CD4-positive, alpha-beta memory T cell (primary cell): ENCODE measurements at regions of chr6 and their contacts with region 1.

Region 1: GRCh38 chr6:26122793-26123674 is 35.8 kb downstream of the HFE start:
- DNase-seq: peak; percentile 94 to 98 (median 98)
- H3K4me3 ChIP-seq: peak overlapping the region; percentile 87 to 98
- H3K4me3 Mint-ChIP-seq: peak overlapping the region; percentile 96 to 100 (median 100)
- H3K27ac ChIP-seq: peak overlapping the region; percentile 89
- H3K27ac Mint-ChIP-seq: peak overlapping the region; percentile 97 to 99 (median 99)
- H3K4me1 ChIP-seq: peaks cover 26% of the 10 kb centered on the region
- H3K4me1 Mint-ChIP-seq: peaks cover 20 to 54% (median 30%) of the 10 kb centered on the region in 4 donors
- H3K27me3 ChIP-seq: no peaks in the 10 kb centered on the region
- H3K27me3 Mint-ChIP-seq: peaks cover 0 to 3% of the 10 kb centered on the region in 2 donors

Region 2: GRCh38 chr6:26031595-26032339 is 91.3 kb before region 1 on chr6:
- CTCF ChIA-PET with region 1: interaction called, 17 read pairs
- POLR2A ChIA-PET with region 1: interaction called, 147 read pairs
- intact Hi-C with region 1: loop called (anchors 1 kb)
- DNase-seq: peak; percentile 86 to 94 (median 89)
- H3K4me3 ChIP-seq: peak overlapping the region; percentile 53 to 67
- H3K4me3 Mint-ChIP-seq: peak overlapping the region; percentile 91 to 99 (median 94)
- H3K27ac ChIP-seq: peak overlapping the region; percentile 71
- H3K27ac Mint-ChIP-seq: peak overlapping the region; percentile 89 to 98 (median 96)
- H3K4me1 ChIP-seq: peaks cover 35% of the 10 kb centered on the region
- H3K4me1 Mint-ChIP-seq: peaks cover 33 to 54% (median 44%) of the 10 kb centered on the region in 4 donors
- H3K27me3 ChIP-seq: no peaks in the 10 kb centered on the region
- H3K27me3 Mint-ChIP-seq: peaks cover 0 to 3% of the 10 kb centered on the region in 2 donors

Region 3: GRCh38 chr6:26087284-26088115 is 35.5 kb before region 1 on chr6 and contains the start of gene HFE:
- CTCF ChIA-PET with region 1: interaction called, 3 read pairs
- POLR2A ChIA-PET with region 1: interaction called, 64 read pairs
- intact Hi-C with region 1: no loop called
- DNase-seq: peak in 4 of 5 donors; percentile 24 to 43 (median 26)
- H3K4me3 ChIP-seq: peak within 1 kb of the TSS; percentile 67 to 79
- H3K4me3 Mint-ChIP-seq: peak within 1 kb of the TSS; percentile 77 to 93 (median 90)
- H3K27ac ChIP-seq: peak within 1 kb of the TSS; percentile 68
- H3K27ac Mint-ChIP-seq: peak within 1 kb of the TSS; percentile 71 to 94 (median 90)
- H3K4me1 ChIP-seq: peaks cover 36% of the 10 kb centered on the region
- H3K4me1 Mint-ChIP-seq: peaks cover 20 to 41% (median 28%) of the 10 kb centered on the region in 4 donors
- H3K27me3 ChIP-seq: no peaks in the 10 kb centered on the region
- H3K27me3 Mint-ChIP-seq: no peaks in the 10 kb centered on the region
- total RNA-seq, gene HFE: 3.5 to 4.2 TPM

Region 4: DNA sequence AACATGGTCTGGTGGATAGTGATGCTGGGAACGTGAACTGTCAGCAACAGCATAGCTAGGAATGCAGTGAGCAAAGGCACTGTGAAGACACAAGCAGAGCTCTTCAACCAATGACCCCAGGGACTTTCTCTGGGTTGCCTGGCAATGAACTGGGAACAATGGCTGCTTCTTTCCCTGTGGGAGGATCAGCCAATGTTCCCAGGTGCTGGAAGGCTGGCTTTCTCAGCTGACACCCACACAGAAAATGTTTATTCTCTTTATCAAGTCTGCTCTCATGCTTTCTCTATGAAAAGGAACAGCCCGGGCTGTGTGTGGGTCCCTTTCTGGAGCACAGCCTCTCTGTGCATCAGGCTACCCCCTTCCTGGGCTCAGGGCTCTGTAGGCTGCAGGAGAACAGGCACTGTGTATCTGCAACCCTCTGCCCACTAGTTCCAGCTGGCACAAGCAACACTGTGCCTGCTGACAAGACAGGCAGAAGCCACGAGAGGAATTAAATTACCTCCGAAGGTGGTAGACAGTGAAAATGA is 18.4 kb after region 1 on chr6:
- CTCF ChIA-PET with region 1: interaction called, 3 read pairs
- POLR2A ChIA-PET with region 1: interaction called, 90 read pairs
- intact Hi-C with region 1: loop called (anchors 1 kb)
- DNase-seq: no peak
- H3K4me3 ChIP-seq: no peak overlapping the region
- H3K4me3 Mint-ChIP-seq: no peak overlapping the region
- H3K27ac ChIP-seq: no peak overlapping the region
- H3K27ac Mint-ChIP-seq: no peak overlapping the region
- H3K4me1 ChIP-seq: no peaks in the 10 kb centered on the region
- H3K4me1 Mint-ChIP-seq: peaks cover 0 to 4% (median 3%) of the 10 kb centered on the region in 4 donors
- H3K27me3 ChIP-seq: no peaks in the 10 kb centered on the region
- H3K27me3 Mint-ChIP-seq: no peaks in the 10 kb centered on the region

Region 5: DNA sequence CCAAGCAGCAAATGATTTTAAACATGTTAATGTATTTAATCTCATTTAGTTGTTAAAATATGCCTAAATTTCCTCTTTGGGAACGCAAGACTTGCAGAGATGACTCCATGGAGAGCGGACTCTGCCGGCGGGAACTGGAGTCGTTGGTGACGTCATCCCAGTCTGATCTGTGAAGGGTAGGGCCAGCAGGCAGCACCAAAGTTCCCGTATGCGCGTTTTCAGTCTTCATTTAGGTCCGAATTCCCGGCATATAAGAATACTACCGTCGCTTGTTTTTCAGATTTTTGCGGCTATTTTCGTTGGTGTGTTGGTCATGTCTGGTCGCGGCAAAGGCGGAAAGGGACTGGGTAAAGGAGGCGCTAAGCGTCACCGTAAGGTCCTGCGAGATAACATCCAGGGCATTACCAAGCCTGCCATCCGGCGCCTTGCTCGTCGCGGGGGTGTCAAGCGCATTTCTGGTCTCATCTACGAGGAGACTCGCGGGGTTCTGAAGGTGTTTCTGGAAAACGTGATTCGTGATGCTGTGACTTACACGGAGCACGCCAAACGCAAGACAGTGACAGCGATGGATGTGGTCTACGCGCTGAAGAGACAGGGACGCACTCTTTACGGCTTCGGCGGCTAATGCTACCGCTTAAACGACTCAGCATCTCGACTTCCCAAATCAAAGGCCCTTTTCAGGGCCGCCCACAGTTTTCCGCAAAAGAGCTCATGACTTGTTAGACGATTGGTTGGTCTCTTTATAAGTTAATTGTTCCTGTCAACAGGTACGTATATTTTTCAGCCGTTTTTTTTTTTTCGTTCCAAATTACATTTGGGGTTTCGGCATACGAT is 81.5 kb after region 1 on chr6:
- CTCF ChIA-PET with region 1: interaction called, 32 read pairs
- POLR2A ChIA-PET with region 1: interaction called, 657 read pairs
- intact Hi-C with region 1: loop called (anchors 1 kb)
- DNase-seq: peak; percentile 85 to 95 (median 89)
- H3K4me3 ChIP-seq: peak overlapping the region; percentile 48 to 87
- H3K4me3 Mint-ChIP-seq: no peak overlapping the region
- H3K27ac ChIP-seq: peak overlapping the region; percentile 82
- H3K27ac Mint-ChIP-seq: no peak overlapping the region
- H3K4me1 ChIP-seq: peaks cover 39% of the 10 kb centered on the region
- H3K4me1 Mint-ChIP-seq: peaks cover 8 to 26% (median 13%) of the 10 kb centered on the region in 4 donors
- H3K27me3 ChIP-seq: no peaks in the 10 kb centered on the region
- H3K27me3 Mint-ChIP-seq: peaks cover 0 to 3% of the 10 kb centered on the region in 2 donors

Region 6: GRCh38 chr6:26295691-26296555 is 172.9 kb after region 1 on chr6:
- CTCF ChIA-PET with region 1: no interaction called
- POLR2A ChIA-PET with region 1: no interaction called
- intact Hi-C with region 1: no loop called
- DNase-seq: no peak
- H3K4me3 ChIP-seq: peak overlapping the region in 1 of 2 donors; percentile 33
- H3K4me3 Mint-ChIP-seq: peak overlapping the region in 7 of 8 donors; percentile 5 to 78 (median 46)
- H3K27ac ChIP-seq: no peak overlapping the region
- H3K27ac Mint-ChIP-seq: peak overlapping the region in 3 of 7 donors; percentile 1 to 5 (median 4)
- H3K4me1 ChIP-seq: peaks cover 4% of the 10 kb centered on the region
- H3K4me1 Mint-ChIP-seq: peaks cover 2 to 9% (median 4%) of the 10 kb centered on the region in 4 donors
- H3K27me3 ChIP-seq: no peaks in the 10 kb centered on the region
- H3K27me3 Mint-ChIP-seq: peaks cover 2 to 4% of the 10 kb centered on the region in 2 donors

Region 7: DNA sequence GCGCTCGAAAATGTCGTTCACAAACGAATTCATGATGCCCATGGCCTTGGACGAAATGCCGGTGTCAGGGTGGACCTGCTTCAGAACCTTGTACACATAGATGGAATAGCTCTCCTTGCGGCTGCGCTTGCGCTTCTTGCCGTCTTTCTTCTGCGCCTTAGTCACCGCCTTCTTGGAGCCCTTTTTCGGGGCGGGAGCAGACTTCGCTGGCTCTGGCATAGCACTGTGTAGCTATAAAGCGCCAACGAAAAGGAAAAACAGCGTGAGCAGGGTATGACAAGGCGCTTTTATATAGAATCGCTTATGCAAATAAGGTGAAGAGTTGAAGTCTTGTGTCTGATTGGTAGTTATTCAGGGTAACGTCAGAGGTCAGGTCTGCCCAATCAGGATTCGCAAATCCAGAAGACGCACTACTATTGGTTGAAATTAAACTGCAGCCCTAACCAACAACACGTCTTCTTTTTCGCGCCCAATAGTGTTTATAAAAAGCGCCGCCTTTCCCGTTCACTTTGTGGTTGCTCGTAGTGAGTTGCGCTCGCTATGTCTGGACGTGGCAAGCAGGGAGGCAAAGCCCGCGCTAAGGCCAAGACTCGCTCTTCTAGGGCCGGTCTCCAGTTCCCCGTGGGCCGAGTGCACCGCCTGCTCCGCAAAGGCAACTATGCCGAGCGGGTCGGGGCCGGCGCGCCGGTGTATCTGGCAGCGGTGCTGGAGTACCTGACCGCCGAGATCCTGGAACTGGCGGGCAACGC is 1009.7 kb after region 1 on chr6:
- CTCF ChIA-PET with region 1: no interaction called
- POLR2A ChIA-PET with region 1: interaction called, 57 read pairs
- intact Hi-C with region 1: loop called (anchors 1 kb)
- DNase-seq: peak; percentile 96 to 99 (median 98)
- H3K4me3 ChIP-seq: peak overlapping the region; percentile 72 to 90
- H3K4me3 Mint-ChIP-seq: no peak overlapping the region
- H3K27ac ChIP-seq: peak overlapping the region; percentile 93
- H3K27ac Mint-ChIP-seq: no peak overlapping the region
- H3K4me1 ChIP-seq: peaks cover 27% of the 10 kb centered on the region
- H3K4me1 Mint-ChIP-seq: peaks cover 0 to 24% (median 10%) of the 10 kb centered on the region in 4 donors
- H3K27me3 ChIP-seq: no peaks in the 10 kb centered on the region
- H3K27me3 Mint-ChIP-seq: no peaks in the 10 kb centered on the region

Region 8: GRCh38 chr6:27871924-27872638 is 1749.0 kb after region 1 on chr6:
- CTCF ChIA-PET with region 1: no interaction called
- POLR2A ChIA-PET with region 1: interaction called, 52 read pairs
- intact Hi-C with region 1: no loop called
- DNase-seq: peak; percentile 91 to 96 (median 94)
- H3K4me3 ChIP-seq: peak overlapping the region; percentile 77 to 89
- H3K4me3 Mint-ChIP-seq: peak overlapping the region; percentile 87 to 94 (median 90)
- H3K27ac ChIP-seq: peak overlapping the region; percentile 86
- H3K27ac Mint-ChIP-seq: peak overlapping the region; percentile 89 to 97 (median 94)
- H3K4me1 ChIP-seq: peaks cover 33% of the 10 kb centered on the region
- H3K4me1 Mint-ChIP-seq: peaks cover 24 to 48% (median 33%) of the 10 kb centered on the region in 4 donors
- H3K27me3 ChIP-seq: no peaks in the 10 kb centered on the region
- H3K27me3 Mint-ChIP-seq: no peaks in the 10 kb centered on the region